ENCODE measurements at regions of chr3 and their contacts with region 1.

Region 1: DNA sequence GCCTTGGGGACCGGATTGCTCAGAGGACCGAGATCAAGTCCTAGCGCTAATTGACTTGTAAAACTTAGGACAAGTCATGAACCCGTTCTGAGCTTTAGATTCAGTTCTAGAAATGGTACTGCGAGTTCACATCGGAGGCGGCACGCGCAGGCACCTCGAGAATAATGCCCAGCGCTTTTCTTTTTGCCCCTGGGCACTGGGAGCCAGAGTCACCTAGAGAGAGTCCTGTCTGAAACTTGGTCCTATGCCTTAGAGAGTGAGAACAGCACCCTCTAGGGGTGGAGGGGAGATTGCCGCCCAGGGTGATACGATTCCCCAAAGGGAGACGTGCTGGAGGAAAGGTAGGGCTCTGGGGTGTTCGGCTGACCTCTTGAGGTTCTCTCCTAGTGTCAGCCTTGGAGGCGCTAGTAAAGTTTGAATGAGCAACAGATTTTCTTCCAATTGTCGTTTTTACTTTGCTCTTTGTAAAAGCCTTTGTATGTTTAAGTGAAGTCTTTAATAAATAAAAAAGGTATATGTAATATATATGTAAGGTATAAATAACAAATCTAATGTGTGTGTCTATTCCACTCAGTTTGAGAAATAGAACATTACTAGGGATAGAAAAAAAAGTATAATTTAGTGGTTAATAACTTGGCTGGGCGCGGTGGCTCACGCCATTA is 826 bp downstream of the EEF1AKMT4 start:
- DNase-seq: peak in 7 of 10 donors; percentile 76 to 95 (median 83)

Region 2: DNA sequence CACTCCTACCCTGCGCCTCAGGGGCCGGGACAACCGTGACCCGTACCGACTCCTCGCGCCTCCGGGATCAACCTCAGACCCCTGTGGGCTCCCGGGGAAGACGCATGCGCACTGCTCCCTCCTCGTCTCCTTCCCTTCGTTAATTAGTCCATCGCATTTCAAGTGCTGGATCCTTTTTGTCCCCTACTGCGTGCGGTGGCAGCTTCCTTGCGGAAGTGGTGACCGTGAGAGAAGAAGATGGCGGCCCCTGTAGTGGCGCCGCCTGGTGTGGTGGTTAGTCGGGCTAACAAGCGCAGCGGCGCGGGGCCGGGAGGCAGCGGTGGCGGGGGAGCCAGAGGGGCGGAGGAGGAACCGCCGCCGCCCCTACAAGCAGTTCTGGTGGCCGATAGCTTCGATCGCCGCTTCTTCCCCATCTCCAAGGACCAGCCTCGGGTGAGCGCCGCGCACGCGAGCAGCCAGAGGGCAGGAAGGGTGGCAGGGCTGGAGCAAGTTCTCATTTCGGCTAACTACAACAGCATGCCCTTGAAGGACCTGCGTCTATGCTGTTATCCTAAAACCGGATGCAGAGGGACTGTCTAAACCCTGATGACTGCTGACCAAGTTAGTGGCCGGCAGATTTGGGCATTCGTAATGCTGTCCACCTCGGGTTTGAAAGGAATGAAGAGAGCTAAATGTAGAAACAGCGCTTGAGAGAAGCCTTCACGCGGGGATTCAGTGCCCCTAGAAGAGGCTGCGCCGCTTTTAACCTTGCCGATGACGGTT is 115.0 kb before region 1 on chr3 and contains the start of gene EIF2B5:
- intact Hi-C with region 1: loop called (anchors 10 kb)
- DNase-seq: peak; percentile 91 to 99 (median 94)

Region 3: GRCh38 chr3:184154885-184155643 is 95.2 kb before region 1 on chr3 and contains the start of gene DVL3:
- intact Hi-C with region 1: no loop called
- DNase-seq: peak; percentile 42 to 95 (median 52)

Region 4: DNA sequence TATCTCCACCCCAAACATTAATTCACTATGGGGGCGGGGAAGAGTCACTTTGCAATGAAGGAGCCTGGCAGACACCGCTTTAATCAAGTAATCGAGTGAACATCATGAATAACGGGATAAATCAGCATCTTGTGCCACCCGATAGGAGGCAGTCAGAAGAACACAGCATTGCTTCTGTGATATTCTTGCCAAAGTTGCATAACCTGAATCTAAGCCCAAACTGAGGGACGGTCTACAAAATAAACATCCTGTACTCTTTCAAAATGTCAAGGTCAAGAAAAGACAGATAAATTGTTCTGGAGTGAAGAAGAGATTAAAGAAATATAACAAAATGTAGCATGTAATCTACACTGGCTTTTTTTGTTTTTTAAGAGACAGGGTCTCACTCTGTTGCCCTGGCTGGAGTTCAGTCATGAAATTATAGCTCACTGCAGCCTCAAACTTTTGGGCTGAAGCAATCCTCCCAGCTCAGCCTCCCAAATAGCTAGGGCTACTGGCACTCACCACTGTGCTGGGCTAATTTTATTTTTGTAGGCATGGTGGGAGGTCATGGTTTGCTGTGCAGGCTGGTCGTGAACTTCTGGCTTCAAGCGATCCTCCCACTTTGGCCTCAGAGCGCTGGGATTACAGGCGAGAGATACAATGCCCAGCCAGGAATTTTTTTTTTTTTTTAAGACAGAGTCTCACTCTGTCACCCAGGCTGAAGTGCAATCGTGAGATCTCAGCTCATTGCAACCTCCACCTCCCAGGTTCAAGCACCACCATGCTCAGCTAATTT is 41.0 kb before region 1 on chr3:
- intact Hi-C with region 1: no loop called
- DNase-seq: peak in 1 of 10 donors; percentile 9

Region 5: DNA sequence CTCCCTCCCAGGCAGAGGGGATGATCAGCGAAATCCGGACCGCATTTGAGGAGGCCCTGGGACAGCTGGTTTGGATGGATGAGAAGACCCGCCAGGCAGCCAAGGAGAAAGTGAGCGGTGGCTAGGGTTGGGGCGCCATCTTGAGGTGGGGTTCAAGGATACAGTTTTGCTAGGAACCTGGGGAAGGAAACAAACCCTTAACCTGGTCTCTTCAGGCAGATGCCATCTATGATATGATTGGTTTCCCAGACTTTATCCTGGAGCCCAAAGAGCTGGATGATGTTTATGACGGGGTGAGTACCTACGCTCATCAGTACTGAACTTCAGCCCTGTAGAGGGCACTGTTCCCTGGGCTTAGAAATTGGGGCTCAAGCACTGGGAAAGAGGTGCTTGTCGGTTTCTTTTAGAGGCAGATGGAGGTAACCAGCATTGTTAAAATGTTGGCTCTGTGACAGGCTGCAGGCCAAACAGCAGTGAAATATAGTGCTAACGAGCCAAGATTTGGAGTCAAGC is 39.2 kb after region 1 on chr3:
- intact Hi-C with region 1: loop called (anchors 5 kb)
- DNase-seq: peak in 9 of 10 donors; percentile 26 to 93 (median 60)

Region 6: DNA sequence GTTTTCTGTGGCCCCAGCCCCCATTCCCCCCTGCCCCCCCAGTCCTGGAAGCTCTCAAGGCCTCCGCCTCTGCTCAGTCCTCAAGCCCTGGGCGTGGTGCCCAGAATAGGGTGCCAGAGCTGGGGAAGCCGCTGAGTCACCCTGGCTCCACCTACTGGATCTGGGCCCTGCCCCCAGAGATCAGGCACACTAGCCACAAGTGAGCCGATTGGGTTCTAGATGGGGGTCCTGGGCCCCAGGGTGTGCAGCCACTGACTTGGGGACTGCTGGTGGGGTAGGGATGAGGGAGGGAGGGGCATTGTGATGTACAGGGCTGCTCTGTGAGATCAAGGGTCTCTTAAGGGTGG is 69.8 kb after region 1 on chr3:
- intact Hi-C with region 1: no loop called
- DNase-seq: peak; percentile 91 to 99 (median 96)

Measured in posterior cingulate gyrus (tissue), 11 donors.